ENCODE measurements at regions of chr7 and their contacts with region 1.

Region 1: DNA sequence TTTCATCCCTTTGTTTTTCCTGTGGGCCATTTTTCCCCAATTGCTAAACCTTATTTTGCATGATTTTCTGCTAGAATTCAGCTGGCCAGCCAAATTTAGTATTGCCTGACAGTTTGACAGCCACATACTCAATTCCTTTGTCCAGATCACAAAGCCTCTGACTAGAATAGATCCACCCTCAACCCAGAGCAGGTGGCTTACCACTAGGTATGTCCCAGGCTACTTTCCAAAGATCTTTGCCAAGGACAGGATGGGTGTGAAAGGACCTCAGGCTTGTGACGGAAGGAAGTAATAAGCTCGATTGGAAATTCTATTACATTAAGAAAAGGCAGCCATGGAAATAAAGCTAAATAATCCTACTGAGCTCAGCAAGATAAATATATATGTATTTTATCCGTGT is 50.6 kb upstream of the AGK start:
- DNase-seq: no peak
- H3K4me3 ChIP-seq: no peak overlapping the region
- H3K27ac ChIP-seq: no peak overlapping the region
- H3K4me1 ChIP-seq: no peaks in the 10 kb centered on the region
- H3K27me3 ChIP-seq: no peaks in the 10 kb centered on the region
- CTCF ChIP-seq: no peak
- POLR2A ChIP-seq: no peak

Region 2: DNA sequence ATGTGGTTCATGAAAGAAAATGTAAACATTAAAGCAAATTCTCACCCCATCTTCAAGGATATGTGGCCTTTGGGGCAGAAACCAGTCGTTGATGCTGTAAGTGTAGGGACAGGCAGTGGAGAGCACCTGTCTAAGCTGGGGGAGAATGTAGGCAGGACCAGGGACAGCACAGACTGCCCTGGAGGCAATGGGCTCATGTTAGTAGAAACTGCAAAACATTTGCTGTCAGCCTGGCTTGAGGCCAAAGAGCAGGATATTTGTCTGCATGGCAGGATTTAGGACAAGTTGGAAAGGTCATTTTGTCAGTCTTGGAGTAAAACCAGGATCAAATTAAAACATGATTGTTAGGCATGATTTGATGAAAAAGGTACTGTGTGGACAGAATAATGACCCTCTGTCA is 161.0 kb before region 1 on chr7:
- CTCF ChIA-PET with region 1: no interaction called
- POLR2A ChIA-PET with region 1: no interaction called
- dilution Hi-C with region 1: no loop called
- intact Hi-C with region 1: loop called (anchors 10 kb)
- DNase-seq: no peak
- H3K4me3 ChIP-seq: no peak overlapping the region
- H3K27ac ChIP-seq: no peak overlapping the region
- H3K4me1 ChIP-seq: no peaks in the 10 kb centered on the region
- H3K27me3 ChIP-seq: no peaks in the 10 kb centered on the region
- CTCF ChIP-seq: no peak
- POLR2A ChIP-seq: no peak

Measured in endothelial cell of umbilical vein (primary cell).